ENCODE measurements at regions of chr1 and their contacts with region 1.

Region 1: DNA sequence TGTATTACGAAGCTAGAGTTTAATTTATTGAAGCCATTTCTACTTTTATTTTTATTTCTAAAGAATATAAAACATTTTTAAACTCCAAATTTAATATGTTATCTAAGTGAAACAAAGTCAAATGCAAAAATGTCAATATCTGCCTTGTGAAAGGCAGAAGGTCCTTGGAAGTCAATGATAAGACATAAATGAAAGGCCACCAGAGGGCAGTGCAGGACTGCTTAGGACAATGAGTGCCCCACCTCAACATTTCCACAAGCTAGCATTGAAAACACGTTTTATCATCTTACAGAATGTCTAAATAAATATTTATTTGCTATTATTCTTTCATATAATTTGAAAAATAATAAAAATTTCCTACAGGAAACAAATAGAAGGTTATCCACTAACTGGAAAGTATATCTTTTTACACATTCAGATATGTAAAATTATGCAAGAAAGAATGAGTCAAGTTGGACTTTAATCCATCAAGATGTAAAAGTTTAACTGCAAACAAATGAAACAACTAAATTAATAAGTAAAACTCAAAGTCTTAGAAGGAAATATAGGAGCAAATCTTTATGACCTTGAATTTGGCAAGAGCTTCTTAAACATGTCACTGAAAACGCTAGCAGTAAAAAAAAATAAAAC is 140.1 kb upstream of the FMN2 start:
- DNase-seq: peak; percentile 92
- H3K4me3 Mint-ChIP-seq: no peak overlapping the region
- H3K27ac Mint-ChIP-seq: no peak overlapping the region
- H3K4me1 Mint-ChIP-seq: no peaks in the 10 kb centered on the region
- H3K27me3 Mint-ChIP-seq: no peaks in the 10 kb centered on the region
- CTCF ChIP-seq: peak; percentile 95

Region 2: GRCh38 chr1:239914751-239915231 is 36.8 kb before region 1 on chr1:
- CTCF ChIA-PET with region 1: interaction called, 15 read pairs
- POLR2A ChIA-PET with region 1: interaction called, 3 read pairs
- intact Hi-C with region 1: no loop called
- DNase-seq: peak; percentile 94
- H3K4me3 Mint-ChIP-seq: no peak overlapping the region
- H3K27ac Mint-ChIP-seq: peak overlapping the region; percentile 59
- H3K4me1 Mint-ChIP-seq: peaks cover 40% of the 10 kb centered on the region
- H3K27me3 Mint-ChIP-seq: no peaks in the 10 kb centered on the region
- CTCF ChIP-seq: peak; percentile 18

Region 3: GRCh38 chr1:239930686-239931262 is 20.9 kb before region 1 on chr1:
- CTCF ChIA-PET with region 1: interaction called, 37 read pairs
- POLR2A ChIA-PET with region 1: no interaction called
- intact Hi-C with region 1: no loop called
- DNase-seq: peak; percentile 61
- H3K4me3 Mint-ChIP-seq: no peak overlapping the region
- H3K27ac Mint-ChIP-seq: no peak overlapping the region
- H3K4me1 Mint-ChIP-seq: peaks cover 10% of the 10 kb centered on the region
- H3K27me3 Mint-ChIP-seq: no peaks in the 10 kb centered on the region
- CTCF ChIP-seq: no peak

Region 4: DNA sequence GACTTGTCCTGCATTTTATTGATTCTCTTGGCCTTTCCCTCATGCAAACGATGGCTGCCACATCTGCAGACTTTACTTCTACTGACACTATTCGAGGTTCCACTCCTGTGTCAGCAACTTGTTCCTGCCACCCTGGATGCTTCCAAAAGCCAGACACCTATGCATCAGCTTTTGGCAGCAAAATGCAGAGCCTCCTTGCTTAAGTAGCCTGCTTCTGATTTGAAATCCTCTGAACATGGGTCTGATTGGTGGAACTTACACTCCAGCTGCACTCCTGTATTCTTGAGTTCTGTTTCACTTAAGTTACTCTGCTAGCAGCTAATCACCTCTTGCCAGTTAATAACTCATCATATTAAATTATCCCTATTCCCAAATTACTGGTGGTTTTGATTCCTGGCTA is 12.0 kb before region 1 on chr1:
- CTCF ChIA-PET with region 1: interaction called, 25 read pairs
- POLR2A ChIA-PET with region 1: interaction called, 8 read pairs
- intact Hi-C with region 1: no loop called
- DNase-seq: peak; percentile 23
- H3K4me3 Mint-ChIP-seq: no peak overlapping the region
- H3K27ac Mint-ChIP-seq: no peak overlapping the region
- H3K4me1 Mint-ChIP-seq: no peaks in the 10 kb centered on the region
- H3K27me3 Mint-ChIP-seq: no peaks in the 10 kb centered on the region
- CTCF ChIP-seq: no peak

Region 5: GRCh38 chr1:239987103-239987745 is 35.6 kb after region 1 on chr1:
- CTCF ChIA-PET with region 1: interaction called, 213 read pairs
- POLR2A ChIA-PET with region 1: no interaction called
- intact Hi-C with region 1: loop called (anchors 2 kb)
- DNase-seq: peak; percentile 75
- H3K4me3 Mint-ChIP-seq: no peak overlapping the region
- H3K27ac Mint-ChIP-seq: no peak overlapping the region
- H3K4me1 Mint-ChIP-seq: no peaks in the 10 kb centered on the region
- H3K27me3 Mint-ChIP-seq: no peaks in the 10 kb centered on the region
- CTCF ChIP-seq: peak; percentile 97

Region 6: GRCh38 chr1:239997160-239997514 is 45.5 kb after region 1 on chr1:
- CTCF ChIA-PET with region 1: interaction called, 97 read pairs
- POLR2A ChIA-PET with region 1: no interaction called
- intact Hi-C with region 1: no loop called
- DNase-seq: no peak
- H3K4me3 Mint-ChIP-seq: no peak overlapping the region
- H3K27ac Mint-ChIP-seq: no peak overlapping the region
- H3K4me1 Mint-ChIP-seq: peaks cover 9% of the 10 kb centered on the region
- H3K27me3 Mint-ChIP-seq: no peaks in the 10 kb centered on the region
- CTCF ChIP-seq: no peak

Measured in MCF 10A (cell line).